B cell (primary cell): ENCODE measurements at regions of chrX and their contacts with region 1.

Region 1: DNA sequence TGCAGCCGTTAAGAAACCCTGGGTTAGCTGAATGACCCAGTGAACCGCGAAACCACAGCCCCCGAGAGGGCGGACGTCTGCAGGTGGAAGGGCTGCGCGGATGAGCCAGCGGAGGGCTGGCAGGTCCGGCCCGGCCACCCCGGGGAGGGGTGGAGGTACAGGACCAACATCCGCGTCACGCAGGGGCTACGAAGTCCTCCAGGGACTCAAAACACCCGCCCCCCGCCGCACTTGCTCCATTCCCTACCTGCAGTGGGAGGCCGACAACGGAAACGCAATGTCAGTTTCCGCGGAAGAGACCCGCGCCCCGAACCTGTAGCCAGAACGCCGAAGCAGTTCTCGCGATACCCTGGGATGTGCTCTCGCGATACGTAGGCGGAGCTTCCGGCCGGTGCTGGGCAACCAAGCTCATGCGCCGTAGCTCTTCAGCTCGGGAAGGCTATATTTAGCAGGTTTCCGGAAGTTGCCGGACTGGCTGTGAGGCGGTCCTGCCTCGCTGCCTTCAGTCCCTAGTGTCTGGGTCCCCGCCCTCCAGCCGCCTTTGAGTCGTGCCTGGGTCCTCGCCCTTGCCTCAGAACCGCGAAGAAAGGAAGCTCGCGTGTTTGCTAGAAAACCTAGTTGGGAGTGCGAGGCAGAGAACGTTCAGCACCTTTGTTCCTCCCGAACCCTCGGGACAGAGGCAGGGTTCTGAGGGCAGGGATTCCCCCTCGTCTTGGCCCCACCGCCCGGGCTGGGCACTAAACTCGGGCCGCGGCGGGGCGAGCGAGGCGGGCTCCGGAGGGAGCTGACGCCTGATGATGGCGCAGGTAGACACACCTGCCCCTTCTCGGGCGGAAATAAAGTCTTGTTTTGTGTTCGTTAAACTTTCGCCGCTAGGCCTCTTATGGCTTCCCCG is at the starts of genes OFD1 and TRAPPC2:
- DNase-seq: peak; percentile 94
- ATAC-seq: peak; percentile 80
- H3K4me3 ChIP-seq: peak within 1 kb of the TSS; percentile 73 to 98 (median 76)
- H3K4me3 Mint-ChIP-seq: peak within 1 kb of the TSS; percentile 93
- H3K27ac ChIP-seq: peak within 1 kb of the TSS; percentile 95 to 97
- H3K27ac Mint-ChIP-seq: peak within 1 kb of the TSS; percentile 97
- H3K4me1 ChIP-seq: peaks cover 40 to 43% of the 10 kb centered on the region in 2 donors
- H3K4me1 Mint-ChIP-seq: peaks cover 52% of the 10 kb centered on the region
- H3K27me3 ChIP-seq: no peaks in the 10 kb centered on the region
- H3K27me3 Mint-ChIP-seq: no peaks in the 10 kb centered on the region
- CTCF ChIP-seq: no peak
- total RNA-seq, gene OFD1: 84.9 and 87.8 TPM in 2 replicates
- total RNA-seq, gene TRAPPC2: 28.0 and 30.3 TPM in 2 replicates

Region 2: DNA sequence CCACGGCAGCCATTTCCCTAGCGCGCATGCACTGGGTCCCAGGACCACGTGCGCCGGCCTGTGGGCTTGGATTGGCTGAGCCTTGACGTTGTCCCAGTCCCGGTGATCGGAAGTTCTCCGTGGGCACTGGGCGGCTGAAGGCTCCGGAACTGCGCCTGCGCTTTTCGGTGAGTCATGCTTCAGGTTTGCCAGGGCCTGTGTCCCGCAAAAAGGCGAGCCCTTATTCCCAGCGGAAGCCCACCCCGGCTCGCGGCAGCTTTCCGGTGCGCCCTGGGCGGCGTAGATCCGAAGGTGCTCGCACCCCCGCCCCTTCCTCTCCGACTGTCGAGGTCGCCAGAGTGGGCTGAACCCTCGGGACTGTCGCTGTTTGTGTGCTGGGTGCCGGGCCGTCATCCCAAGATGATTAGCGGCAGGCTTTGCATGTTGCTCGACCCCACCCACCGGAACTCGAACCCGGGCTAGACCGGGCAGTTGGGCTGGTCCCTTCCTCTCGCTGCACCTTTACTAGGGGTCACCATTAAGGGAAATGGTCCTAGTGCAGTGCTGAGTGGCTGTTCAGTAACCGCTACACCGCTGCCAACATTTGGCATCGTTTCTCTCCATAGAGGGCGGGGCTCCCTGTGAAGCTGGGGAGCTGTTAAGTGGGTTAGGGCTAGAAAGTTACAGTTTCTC is 81.4 kb before region 1 on chrX and contains the start of gene TCEANC:
- CTCF ChIA-PET with region 1: interaction called, 3 read pairs
- POLR2A ChIA-PET with region 1: interaction called, 5 read pairs
- intact Hi-C with region 1: loop called (anchors 1 kb)
- DNase-seq: peak; percentile 92
- ATAC-seq: peak; percentile 93
- H3K4me3 ChIP-seq: peak within 1 kb of the TSS; percentile 59 to 92 (median 78)
- H3K4me3 Mint-ChIP-seq: peak within 1 kb of the TSS; percentile 94
- H3K27ac ChIP-seq: peak within 1 kb of the TSS; percentile 84 to 96
- H3K27ac Mint-ChIP-seq: peak within 1 kb of the TSS; percentile 96
- H3K4me1 ChIP-seq: peaks cover 12 to 15% of the 10 kb centered on the region in 2 donors
- H3K4me1 Mint-ChIP-seq: peaks cover 11% of the 10 kb centered on the region
- H3K27me3 ChIP-seq: no peaks in the 10 kb centered on the region
- H3K27me3 Mint-ChIP-seq: no peaks in the 10 kb centered on the region
- CTCF ChIP-seq: no peak
- total RNA-seq, gene TCEANC: 10.0 and 10.7 TPM in 2 replicates

Region 3: DNA sequence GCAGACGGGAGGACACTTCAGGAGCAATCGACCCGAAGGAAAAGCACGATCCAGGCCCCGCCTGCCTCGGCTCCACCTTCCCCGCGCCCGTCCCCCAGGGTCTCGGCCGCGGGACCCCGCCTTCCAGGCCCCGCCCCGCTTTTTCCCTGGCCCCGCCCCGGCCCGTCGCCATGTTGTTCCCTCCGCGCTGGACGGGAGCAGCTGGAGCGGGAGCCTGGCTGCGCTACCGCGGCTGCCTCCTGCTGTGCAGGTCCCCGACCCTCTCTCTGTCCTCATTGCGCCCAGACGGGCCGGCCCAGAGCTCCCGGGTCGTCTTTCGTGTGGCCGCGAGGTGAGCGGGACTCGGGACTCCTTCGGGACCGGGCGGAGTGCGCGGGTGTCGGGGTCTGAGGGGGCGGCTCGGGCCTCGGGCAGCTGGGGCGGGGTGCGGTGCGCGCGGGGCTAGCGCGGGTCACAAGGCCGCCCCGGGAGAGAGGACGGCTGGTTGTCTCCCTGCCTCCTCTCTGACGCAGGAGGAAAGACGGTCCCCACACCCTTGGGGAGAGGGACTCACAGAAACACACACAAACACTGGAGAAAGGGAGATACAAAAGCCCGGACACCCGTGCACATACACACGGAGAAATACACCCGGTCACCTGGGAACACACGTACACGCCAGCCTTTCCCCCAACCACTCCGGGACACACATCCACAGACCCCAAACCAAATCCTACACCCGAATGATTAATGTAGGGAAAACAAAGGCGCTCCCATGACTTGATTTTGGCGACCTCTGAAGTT is 45.4 kb before region 1 on chrX and contains the start of gene RAB9A:
- CTCF ChIA-PET with region 1: interaction called, 7 read pairs
- POLR2A ChIA-PET with region 1: interaction called, 4 read pairs
- intact Hi-C with region 1: loop called (anchors 1 kb)
- DNase-seq: peak; percentile 79
- ATAC-seq: peak; percentile 91
- H3K4me3 ChIP-seq: peak within 1 kb of the TSS; percentile 61 to 89 (median 78)
- H3K4me3 Mint-ChIP-seq: peak within 1 kb of the TSS; percentile 93
- H3K27ac ChIP-seq: peak within 1 kb of the TSS; percentile 70 to 85
- H3K27ac Mint-ChIP-seq: peak within 1 kb of the TSS; percentile 91
- H3K4me1 ChIP-seq: peaks cover 41 to 43% of the 10 kb centered on the region in 2 donors
- H3K4me1 Mint-ChIP-seq: peaks cover 53% of the 10 kb centered on the region
- H3K27me3 ChIP-seq: no peaks in the 10 kb centered on the region
- H3K27me3 Mint-ChIP-seq: no peaks in the 10 kb centered on the region
- CTCF ChIP-seq: no peak
- total RNA-seq, gene RAB9A: 16.7 and 17.1 TPM in 2 replicates

Region 4: GRCh38 chrX:13699183-13699826 is 35.2 kb before region 1 on chrX:
- CTCF ChIA-PET with region 1: interaction called, 14 read pairs
- POLR2A ChIA-PET with region 1: interaction called, 6 read pairs
- intact Hi-C with region 1: loop called (anchors 2 kb)
- DNase-seq: peak; percentile 17
- ATAC-seq: peak; percentile 40
- H3K4me3 ChIP-seq: peak overlapping the region in 1 of 5 experiments; percentile 11
- H3K4me3 Mint-ChIP-seq: peak overlapping the region; percentile 70
- H3K27ac ChIP-seq: peak overlapping the region in 1 of 2 donors; percentile 10
- H3K27ac Mint-ChIP-seq: peak overlapping the region; percentile 86
- H3K4me1 ChIP-seq: peaks cover 49 to 67% of the 10 kb centered on the region in 2 donors
- H3K4me1 Mint-ChIP-seq: peaks cover 75% of the 10 kb centered on the region
- H3K27me3 ChIP-seq: no peaks in the 10 kb centered on the region
- H3K27me3 Mint-ChIP-seq: no peaks in the 10 kb centered on the region
- CTCF ChIP-seq: no peak

Region 5: DNA sequence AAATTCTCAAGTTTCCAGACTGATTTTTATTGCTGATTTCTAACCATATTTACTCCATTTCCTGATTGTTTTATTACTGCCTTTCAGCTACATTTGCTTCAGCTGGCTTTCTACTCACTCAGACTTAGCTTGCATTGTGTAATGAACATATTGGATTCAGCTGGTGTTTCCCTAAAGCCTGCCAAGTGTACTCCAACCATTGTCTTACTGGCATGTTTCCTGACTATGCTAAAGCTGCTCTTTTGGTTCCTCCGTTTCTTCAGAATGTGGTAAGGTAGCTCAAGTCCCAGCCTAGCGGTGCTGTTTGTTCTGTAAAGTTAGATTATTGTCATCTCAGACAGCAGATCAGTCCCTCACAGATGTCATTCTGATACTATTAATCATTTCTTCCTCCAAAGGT is 741.7 kb after region 1 on chrX:
- CTCF ChIA-PET with region 1: no interaction called
- POLR2A ChIA-PET with region 1: no interaction called
- intact Hi-C with region 1: no loop called
- DNase-seq: no peak
- ATAC-seq: no peak
- H3K4me3 ChIP-seq: no peak overlapping the region
- H3K4me3 Mint-ChIP-seq: no peak overlapping the region
- H3K27ac ChIP-seq: no peak overlapping the region
- H3K27ac Mint-ChIP-seq: no peak overlapping the region
- H3K4me1 ChIP-seq: no peaks in the 10 kb centered on the region
- H3K4me1 Mint-ChIP-seq: no peaks in the 10 kb centered on the region
- H3K27me3 ChIP-seq: no peaks in the 10 kb centered on the region
- H3K27me3 Mint-ChIP-seq: no peaks in the 10 kb centered on the region
- CTCF ChIP-seq: no peak